Activated CD4-positive, alpha-beta memory T cell treated with anti-CD3 and anti-CD28 coated beads, Interleukin-2, amount 10 ng/mL, durations not matched to agents 7 days and 5 days (primary cell): ENCODE measurements at regions of chr4 and their contacts with region 1.

Region 1: GRCh38 chr4:56387023-56388001 is at the start of gene AASDH:
- DNase-seq: peak; percentile 96
- H3K4me3 Mint-ChIP-seq: peak within 1 kb of the TSS; percentile 87
- H3K27ac Mint-ChIP-seq: peak within 1 kb of the TSS; percentile 98
- H3K4me1 Mint-ChIP-seq: peaks cover 38% of the 10 kb centered on the region
- H3K27me3 Mint-ChIP-seq: no peaks in the 10 kb centered on the region
- total RNA-seq, gene AASDH: 9.6 to 11.1 TPM

Region 2: GRCh38 chr4:55948726-55949474 is 438.4 kb before region 1 on chr4 and contains the start of gene CEP135:
- CTCF ChIA-PET with region 1: interaction called, 14 read pairs
- POLR2A ChIA-PET with region 1: interaction called, 27 read pairs
- DNase-seq: peak; percentile 95
- H3K4me3 Mint-ChIP-seq: peak within 1 kb of the TSS; percentile 78
- H3K27ac Mint-ChIP-seq: peak within 1 kb of the TSS; percentile 94
- H3K4me1 Mint-ChIP-seq: peaks cover 46% of the 10 kb centered on the region
- H3K27me3 Mint-ChIP-seq: no peaks in the 10 kb centered on the region
- total RNA-seq, gene CEP135: 18.0 to 18.8 TPM

Region 3: DNA sequence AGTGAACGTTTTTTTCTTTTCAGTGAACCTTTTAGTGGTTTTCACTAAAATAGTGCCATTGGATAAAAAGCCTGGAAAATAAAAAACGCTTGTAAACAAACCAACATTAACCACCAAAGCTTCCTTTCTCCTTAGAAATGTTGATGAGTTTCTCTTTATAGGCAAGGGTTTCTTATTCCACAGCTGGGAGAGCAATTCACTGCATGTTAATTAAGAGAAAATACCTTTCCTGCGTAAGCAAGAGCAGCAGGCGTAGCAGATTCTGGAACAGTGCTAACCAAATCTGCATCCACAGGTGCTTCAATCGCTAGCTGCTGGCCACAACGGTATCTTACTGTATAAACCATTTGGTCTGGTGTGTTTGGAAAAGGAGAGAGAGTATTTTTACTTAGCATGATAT is 13.2 kb after region 1 on chr4:
- CTCF ChIA-PET with region 1: interaction called, 3 read pairs
- POLR2A ChIA-PET with region 1: interaction called, 11 read pairs
- DNase-seq: no peak
- H3K4me3 Mint-ChIP-seq: no peak overlapping the region
- H3K27ac Mint-ChIP-seq: no peak overlapping the region
- H3K4me1 Mint-ChIP-seq: no peaks in the 10 kb centered on the region
- H3K27me3 Mint-ChIP-seq: no peaks in the 10 kb centered on the region

Region 4: DNA sequence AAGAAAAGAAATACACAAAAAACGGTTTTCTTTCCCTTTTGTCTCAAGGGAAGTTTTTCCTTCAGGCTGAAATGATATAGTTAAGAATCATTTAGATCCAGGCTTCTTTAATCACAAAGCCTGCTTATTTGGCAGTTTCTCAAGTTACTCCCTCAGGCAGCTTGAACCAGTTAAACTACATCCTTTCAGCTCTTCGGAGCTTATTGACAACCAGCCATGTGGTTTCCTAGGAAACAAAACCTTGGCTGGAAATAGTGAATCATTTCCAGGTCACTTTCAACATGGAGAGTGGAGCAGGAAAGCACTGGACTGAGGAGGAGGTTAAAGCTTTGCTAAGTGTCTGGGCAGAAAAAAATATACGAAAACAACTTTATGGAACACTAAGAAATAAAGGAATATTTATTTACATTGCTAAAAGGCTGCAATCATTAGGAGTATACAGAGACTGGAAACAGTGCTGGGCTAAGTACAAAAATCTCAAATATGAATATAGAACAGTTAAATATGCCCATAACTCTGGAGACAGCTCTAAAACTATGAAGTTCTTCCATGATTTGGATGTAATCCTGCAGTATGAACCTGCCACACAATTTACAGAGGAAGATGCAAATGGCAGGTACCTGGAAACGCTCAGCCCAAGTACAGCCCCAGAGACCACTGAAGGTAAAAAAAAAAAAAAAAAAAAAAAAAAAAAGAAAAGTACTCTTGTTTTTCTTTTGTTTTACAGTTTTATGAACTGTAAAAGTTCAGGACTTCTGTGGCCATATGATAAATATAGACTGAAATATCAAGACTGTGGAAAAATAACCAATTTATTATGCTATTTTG is 23.1 kb after region 1 on chr4:
- CTCF ChIA-PET with region 1: interaction called, 5 read pairs
- POLR2A ChIA-PET with region 1: interaction called, 17 read pairs
- DNase-seq: no peak
- H3K4me3 Mint-ChIP-seq: no peak overlapping the region
- H3K27ac Mint-ChIP-seq: no peak overlapping the region
- H3K4me1 Mint-ChIP-seq: peaks cover 26% of the 10 kb centered on the region
- H3K27me3 Mint-ChIP-seq: no peaks in the 10 kb centered on the region

Region 5: GRCh38 chr4:56424697-56425514 is 37.6 kb after region 1 on chr4:
- CTCF ChIA-PET with region 1: interaction called, 7 read pairs
- POLR2A ChIA-PET with region 1: interaction called, 11 read pairs
- DNase-seq: peak; percentile 32
- H3K4me3 Mint-ChIP-seq: no peak overlapping the region
- H3K27ac Mint-ChIP-seq: no peak overlapping the region
- H3K4me1 Mint-ChIP-seq: peaks cover 17% of the 10 kb centered on the region
- H3K27me3 Mint-ChIP-seq: no peaks in the 10 kb centered on the region

Region 6: DNA sequence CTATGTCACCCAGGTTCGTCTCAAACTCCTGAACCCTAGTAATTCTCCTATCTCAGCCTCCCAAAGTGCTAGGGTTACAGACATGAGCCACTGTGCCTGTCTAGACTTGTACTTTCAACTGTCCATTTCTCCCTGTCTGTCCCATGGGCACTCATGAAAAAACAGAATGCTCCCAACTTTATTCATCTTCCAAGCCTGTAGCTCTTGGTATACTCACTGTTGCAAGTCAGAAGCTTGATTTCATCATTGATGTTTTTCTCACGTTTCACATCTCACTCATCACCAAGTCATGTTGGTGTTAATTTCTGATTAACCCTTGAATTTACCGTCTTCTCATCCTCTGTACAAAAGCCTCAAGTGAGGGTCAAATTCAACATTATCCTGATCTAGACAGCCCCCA is 72.8 kb after region 1 on chr4:
- CTCF ChIA-PET with region 1: no interaction called
- POLR2A ChIA-PET with region 1: interaction called, 11 read pairs
- DNase-seq: no peak
- H3K4me3 Mint-ChIP-seq: no peak overlapping the region
- H3K27ac Mint-ChIP-seq: peak overlapping the region; percentile 24
- H3K4me1 Mint-ChIP-seq: peaks cover 14% of the 10 kb centered on the region
- H3K27me3 Mint-ChIP-seq: no peaks in the 10 kb centered on the region

Region 7: DNA sequence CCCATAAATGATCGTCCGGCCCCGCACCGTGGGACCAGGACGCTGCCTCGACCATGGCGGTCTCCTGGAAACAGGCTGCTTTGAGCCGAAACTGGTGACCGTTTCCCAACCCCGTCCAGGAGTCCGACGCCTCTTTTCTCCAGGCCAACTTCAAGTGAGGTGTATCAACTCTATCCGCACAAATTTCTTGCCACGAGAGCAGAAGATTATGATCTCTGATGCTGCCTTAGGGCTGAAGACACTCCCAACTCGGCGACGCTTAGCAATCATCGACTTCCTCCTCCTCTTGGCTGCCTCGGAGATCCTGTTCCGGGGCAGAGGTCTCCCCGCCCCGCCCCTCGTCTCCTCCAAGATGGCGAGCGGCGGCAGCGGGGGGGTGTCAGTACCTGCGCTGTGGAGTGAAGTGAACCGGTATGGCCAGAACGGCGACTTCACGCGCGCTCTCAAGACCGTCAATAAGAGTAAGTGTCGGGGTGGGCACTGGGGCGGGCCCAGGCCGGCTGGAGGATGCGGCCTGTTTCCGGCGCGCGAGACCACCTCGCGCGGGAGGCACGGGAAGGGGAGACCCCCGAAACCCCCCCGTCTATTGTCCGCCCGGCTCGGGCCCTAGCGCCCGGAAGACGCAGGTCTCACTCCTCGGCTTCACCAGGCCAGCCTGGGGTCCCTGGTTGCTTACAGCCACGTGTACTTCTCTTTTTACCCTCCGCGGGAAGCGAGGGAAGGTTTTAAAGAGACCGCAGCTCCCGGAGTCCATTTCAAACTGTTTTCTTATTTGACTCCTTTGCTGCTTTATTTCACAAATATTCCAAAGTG is 80.2 kb after region 1 on chr4 and contains the start of gene SRP72:
- CTCF ChIA-PET with region 1: interaction called, 5 read pairs
- POLR2A ChIA-PET with region 1: interaction called, 18 read pairs
- DNase-seq: peak; percentile 91
- H3K4me3 Mint-ChIP-seq: peak within 1 kb of the TSS; percentile 94
- H3K27ac Mint-ChIP-seq: peak within 1 kb of the TSS; percentile 95
- H3K4me1 Mint-ChIP-seq: peaks cover 52% of the 10 kb centered on the region
- H3K27me3 Mint-ChIP-seq: no peaks in the 10 kb centered on the region
- total RNA-seq, gene SRP72: 140 to 142 TPM

Region 8: GRCh38 chr4:56512166-56512565 is 124.9 kb after region 1 on chr4:
- CTCF ChIA-PET with region 1: no interaction called
- POLR2A ChIA-PET with region 1: no interaction called
- DNase-seq: no peak
- H3K4me3 Mint-ChIP-seq: no peak overlapping the region
- H3K27ac Mint-ChIP-seq: no peak overlapping the region
- H3K4me1 Mint-ChIP-seq: no peaks in the 10 kb centered on the region
- H3K27me3 Mint-ChIP-seq: peaks cover 5% of the 10 kb centered on the region